Activated T-helper 2 cell treated with anti-CD3 and anti-CD28 coated beads, Interferon-gamma antibody, Interleukin-2, Interleukin-4, amounts not matched to agents 10 μg/mL and 5 μg/mL and 100 μg/mL, durations not matched to agents 14 hours and 24 hours and 36 hours (primary cell): ENCODE measurements at regions of chr20 and their contacts with region 1.

Region 1: GRCh38 chr20:17569616-17570346 is at the start of gene DSTN:
- DNase-seq: peak; percentile 85
- H3K4me3 Mint-ChIP-seq: peak within 1 kb of the TSS; percentile 93
- H3K27ac Mint-ChIP-seq: peak within 1 kb of the TSS; percentile 90
- H3K4me1 Mint-ChIP-seq: peaks cover 22% of the 10 kb centered on the region
- H3K27me3 Mint-ChIP-seq: peaks cover 9% of the 10 kb centered on the region
- total RNA-seq, gene DSTN: 61.2 and 64.3 TPM in 2 replicates

Region 2: DNA sequence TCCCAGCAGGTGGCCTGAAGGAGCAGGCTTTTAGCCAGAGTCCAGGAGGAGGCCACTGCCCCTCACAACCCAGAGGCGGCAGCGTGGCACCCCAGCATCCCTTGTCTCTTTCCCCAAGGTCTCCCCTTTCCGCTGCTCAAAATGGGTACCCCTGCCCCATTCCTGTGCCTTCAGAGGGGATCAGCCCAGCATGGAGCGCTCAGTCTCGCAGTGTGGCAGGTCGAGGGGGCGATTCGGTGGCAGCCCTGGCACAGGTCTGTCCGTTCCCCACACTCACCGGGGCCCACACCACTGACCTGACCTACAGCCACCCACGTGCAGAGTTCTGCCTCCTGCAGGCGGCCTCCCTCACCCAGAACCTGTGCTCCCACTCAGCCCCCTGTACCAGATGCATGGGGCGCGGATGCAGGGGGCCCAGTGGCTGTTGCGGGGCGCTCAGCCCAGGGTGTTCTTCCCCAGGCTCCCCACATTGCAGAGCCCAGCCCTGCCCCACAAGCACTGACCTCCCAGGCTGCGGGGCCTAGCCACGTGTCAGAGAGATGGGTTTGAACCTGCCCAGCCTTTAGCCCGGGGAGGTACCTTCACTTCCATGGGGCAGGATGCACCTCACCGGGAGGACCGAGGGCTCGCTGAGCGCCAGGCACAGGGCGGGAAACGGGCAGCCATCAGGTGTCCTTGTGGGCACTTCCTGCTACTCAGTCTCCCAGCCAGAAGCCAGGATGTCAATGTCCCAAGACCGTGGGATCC is 41.9 kb after region 1 on chr20:
- intact Hi-C with region 1: loop called (anchors 2 kb)
- DNase-seq: no peak
- H3K4me3 Mint-ChIP-seq: no peak overlapping the region
- H3K27ac Mint-ChIP-seq: no peak overlapping the region
- H3K4me1 Mint-ChIP-seq: peaks cover 22% of the 10 kb centered on the region
- H3K27me3 Mint-ChIP-seq: no peaks in the 10 kb centered on the region

Region 3: DNA sequence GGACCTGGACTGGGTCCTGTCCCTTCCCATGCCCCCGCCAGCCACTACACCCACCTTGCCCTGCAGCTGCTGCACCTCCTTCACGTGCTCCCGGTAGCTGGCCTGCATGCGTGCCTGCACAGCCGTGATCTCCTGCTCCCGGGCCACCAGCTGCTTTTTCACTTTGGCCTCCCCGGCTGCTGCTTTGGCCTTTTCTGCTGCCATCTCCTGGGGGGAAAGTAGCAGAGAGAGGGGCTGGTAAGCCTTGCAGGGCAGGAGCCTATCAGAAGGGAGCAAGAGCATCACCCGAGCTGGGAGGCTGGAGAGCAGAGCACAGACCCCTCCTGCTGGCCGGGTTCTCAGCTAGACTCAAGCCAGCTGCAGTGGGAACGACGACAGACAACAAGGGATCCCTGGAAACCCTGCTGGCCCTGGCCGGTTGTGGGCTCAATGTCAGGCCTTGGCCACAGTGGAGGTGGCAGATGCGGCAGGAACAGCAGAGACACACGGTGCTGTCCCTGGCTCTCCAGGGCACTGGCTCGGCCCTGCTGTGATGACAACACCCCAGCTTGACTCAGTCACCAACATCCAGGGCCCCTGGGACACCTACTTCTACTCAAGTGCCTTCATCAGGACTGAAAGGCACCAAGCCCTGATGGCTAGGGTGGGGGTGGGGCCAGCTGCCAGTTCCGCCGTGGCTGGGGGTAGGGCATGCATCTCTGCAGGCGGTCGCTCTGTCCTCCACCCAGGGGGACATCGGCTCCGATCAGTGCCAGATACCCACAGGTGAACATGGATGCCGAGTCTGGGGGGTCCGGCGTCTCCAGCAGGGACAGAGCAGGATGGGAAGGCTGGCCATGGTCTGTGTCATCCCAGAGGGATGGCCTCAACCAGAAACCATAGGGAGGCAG is 67.0 kb after region 1 on chr20:
- intact Hi-C with region 1: no loop called
- DNase-seq: no peak
- H3K4me3 Mint-ChIP-seq: no peak overlapping the region
- H3K27ac Mint-ChIP-seq: no peak overlapping the region
- H3K4me1 Mint-ChIP-seq: no peaks in the 10 kb centered on the region
- H3K27me3 Mint-ChIP-seq: no peaks in the 10 kb centered on the region